ENCODE measurements at regions of chr5 and their contacts with region 1.

Region 1: GRCh38 chr5:141811287-141812155 is 66.7 kb downstream of the PCDH1 start:
- DNase-seq: peak; percentile 86
- H3K4me3 ChIP-seq: peak overlapping the region in 1 of 2 experiments; percentile 24; a peak in 2 of 4 replicates
- H3K27ac ChIP-seq: no peak overlapping the region
- H3K4me1 ChIP-seq: peaks cover 0 to 16% of the 10 kb centered on the region in 2 experiments; a peak in 1 of 4 replicates
- H3K27me3 ChIP-seq: peaks cover 19% of the 10 kb centered on the region
- CTCF ChIP-seq: peak; percentile 75
- EP300 ChIP-seq: no peak
- RAD21 ChIP-seq: peak; percentile 52; the same call in 1 of the 2 replicates

Region 2: GRCh38 chr5:141729387-141730006 is 82.0 kb before region 1 on chr5:
- CTCF ChIA-PET with region 1: interaction called, 36 read pairs
- POLR2A ChIA-PET with region 1: interaction called, 3 read pairs
- DNase-seq: peak; percentile 78
- H3K4me3 ChIP-seq: no peak overlapping the region
- H3K27ac ChIP-seq: peak overlapping the region in 1 of 2 experiments; percentile 96; a peak in 2 of 4 replicates
- H3K4me1 ChIP-seq: peaks cover 0 to 51% of the 10 kb centered on the region in 2 experiments; a peak in 2 of 4 replicates
- H3K27me3 ChIP-seq: peaks cover 10% of the 10 kb centered on the region
- CTCF ChIP-seq: no peak
- EP300 ChIP-seq: peak in 1 of 2 experiments; percentile 97; a peak in 2 of 4 replicates
- RAD21 ChIP-seq: peak; percentile 41

Region 3: DNA sequence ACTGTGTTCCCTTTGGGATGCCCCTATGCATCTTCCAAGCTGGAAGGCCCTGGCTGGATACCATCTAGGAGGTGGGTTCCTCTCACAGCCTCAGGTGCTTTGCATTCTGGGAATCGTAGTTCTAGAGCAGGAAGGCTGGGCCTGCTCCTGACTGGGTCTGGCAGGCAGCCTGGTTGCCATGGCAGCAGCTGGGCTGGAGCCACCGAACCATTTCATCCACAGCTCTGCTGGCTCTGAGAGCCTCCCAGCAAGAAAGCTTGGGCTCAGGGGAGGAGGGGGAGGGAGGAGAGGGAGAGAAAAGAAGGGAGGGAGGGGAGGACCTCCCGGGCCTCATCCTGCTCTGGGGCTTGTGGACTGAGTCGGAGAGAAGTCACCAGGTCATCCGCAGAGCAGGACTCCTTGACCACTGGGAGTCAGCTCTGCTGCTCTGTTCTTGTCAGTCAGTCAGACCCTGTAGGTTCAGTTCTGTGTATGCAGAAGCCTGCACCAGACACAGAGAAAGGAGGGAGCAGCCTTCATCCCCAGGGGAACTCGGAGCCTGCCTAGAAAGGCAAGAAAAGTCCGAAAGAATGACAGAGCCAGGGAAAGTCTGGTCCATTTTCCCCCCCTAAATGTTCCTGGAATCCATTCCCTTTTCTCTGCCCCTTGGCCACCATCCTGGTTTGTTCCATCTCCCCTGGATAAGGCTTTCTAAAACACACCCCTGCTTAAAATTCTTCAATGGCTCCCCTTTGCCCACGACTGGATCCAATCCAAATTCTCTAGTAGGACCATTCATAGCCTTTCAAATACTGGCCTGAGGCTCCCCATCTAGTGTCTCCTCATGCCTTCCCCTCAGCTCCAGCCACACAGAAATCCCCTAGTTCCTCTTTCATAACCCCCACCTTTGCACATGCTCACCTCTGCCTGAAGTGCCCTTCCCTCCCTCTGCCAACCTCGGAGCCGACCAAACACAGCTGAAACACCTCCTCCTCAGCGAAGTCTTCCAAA is 64.1 kb before region 1 on chr5:
- CTCF ChIA-PET with region 1: interaction called, 10 read pairs
- POLR2A ChIA-PET with region 1: interaction called, 3 read pairs
- DNase-seq: peak; percentile 91
- H3K4me3 ChIP-seq: no peak overlapping the region
- H3K27ac ChIP-seq: peak overlapping the region in 1 of 2 experiments; percentile 89; a peak in 2 of 4 replicates
- H3K4me1 ChIP-seq: peaks cover 0 to 38% of the 10 kb centered on the region in 2 experiments; a peak in 2 of 4 replicates
- H3K27me3 ChIP-seq: no peaks in the 10 kb centered on the region; the same call in 1 of the 2 replicates
- CTCF ChIP-seq: no peak
- EP300 ChIP-seq: no peak; a peak in 1 of 4 replicates
- RAD21 ChIP-seq: peak; percentile 14; the same call in 1 of the 2 replicates

Region 4: GRCh38 chr5:141793881-141794280 is 17.6 kb before region 1 on chr5:
- CTCF ChIA-PET with region 1: interaction called, 72 read pairs
- POLR2A ChIA-PET with region 1: no interaction called
- DNase-seq: no peak
- H3K4me3 ChIP-seq: no peak overlapping the region
- H3K27ac ChIP-seq: no peak overlapping the region
- H3K4me1 ChIP-seq: peaks cover 0 to 5% of the 10 kb centered on the region in 2 experiments; a peak in 1 of 4 replicates
- H3K27me3 ChIP-seq: peaks cover 14% of the 10 kb centered on the region; the same call in 1 of the 2 replicates
- CTCF ChIP-seq: no peak
- EP300 ChIP-seq: no peak
- RAD21 ChIP-seq: no peak

Region 5: GRCh38 chr5:141835928-141836670 is 24.6 kb after region 1 on chr5:
- CTCF ChIA-PET with region 1: interaction called, 20 read pairs
- POLR2A ChIA-PET with region 1: no interaction called
- DNase-seq: no peak
- H3K4me3 ChIP-seq: no peak overlapping the region
- H3K27ac ChIP-seq: no peak overlapping the region
- H3K4me1 ChIP-seq: peaks cover 0 to 59% of the 10 kb centered on the region in 2 experiments; a peak in 2 of 4 replicates
- H3K27me3 ChIP-seq: peaks cover 17% of the 10 kb centered on the region; the same call in 1 of the 2 replicates
- CTCF ChIP-seq: no peak
- EP300 ChIP-seq: no peak
- RAD21 ChIP-seq: no peak

Measured in SK-N-SH (cell line).